Mammary epithelial cell (primary cell): ENCODE measurements at regions of chr12 and their contacts with region 1.

Region 1: GRCh38 chr12:15700595-15700994 is 88.6 kb downstream of the EPS8 start:
- DNase-seq: peak; percentile 83
- H3K4me3 ChIP-seq: no peak overlapping the region
- H3K27ac ChIP-seq: peak overlapping the region; percentile 85
- H3K4me1 ChIP-seq: peaks cover 26% of the 10 kb centered on the region
- H3K27me3 ChIP-seq: no peaks in the 10 kb centered on the region
- CTCF ChIP-seq: no peak

Region 2: GRCh38 chr12:15472036-15472435 is 228.6 kb before region 1 on chr12:
- CTCF ChIA-PET with region 1: no interaction called
- dilution Hi-C with region 1: no loop called
- in situ Hi-C with region 1: no loop called
- intact Hi-C with region 1: no loop called
- DNase-seq: peak; percentile 80
- H3K4me3 ChIP-seq: no peak overlapping the region
- H3K27ac ChIP-seq: no peak overlapping the region
- H3K4me1 ChIP-seq: no peaks in the 10 kb centered on the region
- H3K27me3 ChIP-seq: no peaks in the 10 kb centered on the region
- CTCF ChIP-seq: no peak

Region 3: GRCh38 chr12:15590180-15590826 is 110.3 kb before region 1 on chr12:
- CTCF ChIA-PET with region 1: no interaction called
- dilution Hi-C with region 1: no loop called
- in situ Hi-C with region 1: no loop called
- intact Hi-C with region 1: loop called (anchors 1 kb)
- DNase-seq: peak; percentile 73
- H3K4me3 ChIP-seq: peak overlapping the region; percentile 51 to 54 (median 52)
- H3K27ac ChIP-seq: peak overlapping the region; percentile 6
- H3K4me1 ChIP-seq: peaks cover 5% of the 10 kb centered on the region
- H3K27me3 ChIP-seq: no peaks in the 10 kb centered on the region
- CTCF ChIP-seq: peak; percentile 78 to 90